CD8-positive, alpha-beta T cell (primary cell): ENCODE measurements at regions of chr12 and their contacts with region 1.

Region 1: GRCh38 chr12:14340371-14340770 is 25.1 kb upstream of the ATF7IP start:
- DNase-seq: no peak
- ATAC-seq: no peak
- H3K4me3 ChIP-seq: no peak overlapping the region
- H3K4me3 Mint-ChIP-seq: no peak overlapping the region
- H3K27ac ChIP-seq: no peak overlapping the region
- H3K27ac Mint-ChIP-seq: no peak overlapping the region
- H3K4me1 ChIP-seq: no peaks in the 10 kb centered on the region
- H3K4me1 Mint-ChIP-seq: no peaks in the 10 kb centered on the region
- H3K27me3 ChIP-seq: no peaks in the 10 kb centered on the region
- H3K27me3 Mint-ChIP-seq: no peaks in the 10 kb centered on the region
- CTCF ChIP-seq: no peak

Region 2: GRCh38 chr12:14264778-14265177 is 75.6 kb before region 1 on chr12:
- CTCF ChIA-PET with region 1: no interaction called
- POLR2A ChIA-PET with region 1: no interaction called
- intact Hi-C with region 1: loop called in 1 of 2 experiments (anchors 5 kb)
- DNase-seq: no peak
- ATAC-seq: no peak
- H3K4me3 ChIP-seq: no peak overlapping the region
- H3K4me3 Mint-ChIP-seq: no peak overlapping the region
- H3K27ac ChIP-seq: no peak overlapping the region
- H3K27ac Mint-ChIP-seq: no peak overlapping the region
- H3K4me1 ChIP-seq: no peaks in the 10 kb centered on the region
- H3K4me1 Mint-ChIP-seq: peaks cover 10% of the 10 kb centered on the region
- H3K27me3 ChIP-seq: no peaks in the 10 kb centered on the region
- H3K27me3 Mint-ChIP-seq: no peaks in the 10 kb centered on the region
- CTCF ChIP-seq: no peak